CD8-positive, alpha-beta T cell (primary cell): ENCODE measurements at regions of chr10 and their contacts with region 1.

Region 1: GRCh38 chr10:133509700-133510099 is 17.5 kb upstream of the CYP2E1 start:
- DNase-seq: no peak
- ATAC-seq: no peak
- H3K4me3 ChIP-seq: no peak overlapping the region
- H3K4me3 Mint-ChIP-seq: no peak overlapping the region
- H3K27ac ChIP-seq: no peak overlapping the region
- H3K27ac Mint-ChIP-seq: no peak overlapping the region
- H3K4me1 ChIP-seq: no peaks in the 10 kb centered on the region
- H3K4me1 Mint-ChIP-seq: no peaks in the 10 kb centered on the region
- H3K27me3 ChIP-seq: no peaks in the 10 kb centered on the region
- H3K27me3 Mint-ChIP-seq: peaks cover 8% of the 10 kb centered on the region
- CTCF ChIP-seq: no peak

Region 2: GRCh38 chr10:133394064-133394663 is 115.5 kb before region 1 on chr10 and contains the start of gene MTG1:
- CTCF ChIA-PET with region 1: no interaction called
- POLR2A ChIA-PET with region 1: no interaction called
- intact Hi-C with region 1: no loop called
- DNase-seq: peak; percentile 80 to 96 (median 93)
- ATAC-seq: peak; percentile 68
- H3K4me3 ChIP-seq: peak within 1 kb of the TSS; percentile 69 to 92
- H3K4me3 Mint-ChIP-seq: peak within 1 kb of the TSS; percentile 86
- H3K27ac ChIP-seq: peak within 1 kb of the TSS; percentile 71 to 76
- H3K27ac Mint-ChIP-seq: peak within 1 kb of the TSS; percentile 89
- H3K4me1 ChIP-seq: peaks cover 40% of the 10 kb centered on the region
- H3K4me1 Mint-ChIP-seq: peaks cover 50% of the 10 kb centered on the region
- H3K27me3 ChIP-seq: no peaks in the 10 kb centered on the region
- H3K27me3 Mint-ChIP-seq: no peaks in the 10 kb centered on the region
- CTCF ChIP-seq: no peak
- total RNA-seq, gene MTG1: 30.2 to 31.0 TPM

Region 3: GRCh38 chr10:133520155-133520738 is 10.5 kb after region 1 on chr10:
- CTCF ChIA-PET with region 1: interaction called, 10 read pairs
- POLR2A ChIA-PET with region 1: no interaction called
- intact Hi-C with region 1: no loop called
- DNase-seq: peak; percentile 78 to 97 (median 89)
- ATAC-seq: peak; percentile 99
- H3K4me3 ChIP-seq: peak overlapping the region; percentile 47 to 61
- H3K4me3 Mint-ChIP-seq: peak overlapping the region; percentile 63
- H3K27ac ChIP-seq: no peak overlapping the region
- H3K27ac Mint-ChIP-seq: peak overlapping the region; percentile 45
- H3K4me1 ChIP-seq: peaks cover 6% of the 10 kb centered on the region
- H3K4me1 Mint-ChIP-seq: peaks cover 13% of the 10 kb centered on the region
- H3K27me3 ChIP-seq: no peaks in the 10 kb centered on the region
- H3K27me3 Mint-ChIP-seq: peaks cover 3% of the 10 kb centered on the region
- CTCF ChIP-seq: peak; percentile 88

Region 4: GRCh38 chr10:133530506-133530905 is 20.8 kb after region 1 on chr10:
- CTCF ChIA-PET with region 1: no interaction called
- POLR2A ChIA-PET with region 1: no interaction called
- intact Hi-C with region 1: no loop called
- DNase-seq: no peak
- ATAC-seq: no peak
- H3K4me3 ChIP-seq: no peak overlapping the region
- H3K4me3 Mint-ChIP-seq: no peak overlapping the region
- H3K27ac ChIP-seq: no peak overlapping the region
- H3K27ac Mint-ChIP-seq: no peak overlapping the region
- H3K4me1 ChIP-seq: peaks cover 20% of the 10 kb centered on the region
- H3K4me1 Mint-ChIP-seq: peaks cover 24% of the 10 kb centered on the region
- H3K27me3 ChIP-seq: peaks cover 19 to 27% of the 10 kb centered on the region in 2 experiments
- H3K27me3 Mint-ChIP-seq: peaks cover 47% of the 10 kb centered on the region
- CTCF ChIP-seq: no peak